Panc1 (cell line): ENCODE measurements at regions of chr10 and their contacts with region 1.

Region 1: GRCh38 chr10:54402576-54402975 is 398.5 kb downstream of the PCDH15 start:
- DNase-seq: peak; percentile 7
- ATAC-seq: no peak
- H3K4me3 ChIP-seq: no peak overlapping the region
- H3K27ac ChIP-seq: no peak overlapping the region
- H3K4me1 ChIP-seq: no peaks in the 10 kb centered on the region
- H3K27me3 ChIP-seq: no peaks in the 10 kb centered on the region
- CTCF ChIP-seq: peak; percentile 58; the same call in 1 of the 2 replicates

Region 2: DNA sequence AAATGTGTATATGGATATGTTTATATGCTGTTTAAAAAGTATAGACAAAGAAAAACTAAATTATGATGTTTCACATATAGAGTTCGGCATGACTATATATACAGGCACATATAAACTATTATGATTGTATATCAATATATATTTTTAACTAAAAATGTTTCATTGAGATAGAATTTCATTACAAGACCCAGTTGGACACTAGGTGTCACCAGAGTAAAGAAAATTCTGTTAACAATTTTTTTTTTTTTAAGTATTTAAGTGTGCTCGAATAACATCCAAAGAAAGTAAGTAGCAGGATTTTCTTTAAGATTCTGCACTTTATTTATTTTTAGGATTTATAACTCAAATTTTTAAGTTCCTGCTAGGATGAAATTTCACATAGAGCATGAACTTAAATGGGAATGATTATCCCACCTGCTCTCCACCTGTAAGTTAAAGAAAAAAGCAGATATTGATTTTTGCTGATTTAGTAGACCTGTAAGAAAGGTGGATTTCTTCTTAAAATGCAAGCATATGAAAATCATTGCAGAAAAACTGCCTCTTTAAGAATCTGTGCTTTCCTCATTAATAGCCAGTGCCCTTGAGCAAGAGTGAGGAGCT is 563.0 kb before region 1 on chr10:
- CTCF ChIA-PET with region 1: no interaction called
- POLR2A ChIA-PET with region 1: no interaction called
- in situ Hi-C with region 1: no loop called
- intact Hi-C with region 1: loop called (anchors 2 kb)
- DNase-seq: peak; percentile 20
- ATAC-seq: no peak
- H3K4me3 ChIP-seq: no peak overlapping the region
- H3K27ac ChIP-seq: no peak overlapping the region
- H3K4me1 ChIP-seq: no peaks in the 10 kb centered on the region
- H3K27me3 ChIP-seq: no peaks in the 10 kb centered on the region
- CTCF ChIP-seq: peak; percentile 50; the same call in 1 of the 2 replicates

Region 3: GRCh38 chr10:53997953-53998352 is 404.6 kb before region 1 on chr10:
- CTCF ChIA-PET with region 1: no interaction called
- POLR2A ChIA-PET with region 1: no interaction called
- in situ Hi-C with region 1: no loop called
- intact Hi-C with region 1: loop called (anchors 2 kb)
- DNase-seq: no peak
- ATAC-seq: no peak
- H3K4me3 ChIP-seq: no peak overlapping the region
- H3K27ac ChIP-seq: no peak overlapping the region
- H3K4me1 ChIP-seq: no peaks in the 10 kb centered on the region
- H3K27me3 ChIP-seq: no peaks in the 10 kb centered on the region
- CTCF ChIP-seq: peak; percentile 47; the same call in 1 of the 2 replicates

Region 4: GRCh38 chr10:54133203-54133602 is 269.4 kb before region 1 on chr10:
- CTCF ChIA-PET with region 1: no interaction called
- POLR2A ChIA-PET with region 1: no interaction called
- in situ Hi-C with region 1: no loop called
- intact Hi-C with region 1: loop called (anchors 2 kb)
- DNase-seq: no peak
- ATAC-seq: no peak
- H3K4me3 ChIP-seq: no peak overlapping the region
- H3K27ac ChIP-seq: no peak overlapping the region
- H3K4me1 ChIP-seq: no peaks in the 10 kb centered on the region
- H3K27me3 ChIP-seq: no peaks in the 10 kb centered on the region
- CTCF ChIP-seq: peak; percentile 43; the same call in 1 of the 2 replicates